ENCODE measurements at regions of chr10 and their contacts with region 1.

Region 1: DNA sequence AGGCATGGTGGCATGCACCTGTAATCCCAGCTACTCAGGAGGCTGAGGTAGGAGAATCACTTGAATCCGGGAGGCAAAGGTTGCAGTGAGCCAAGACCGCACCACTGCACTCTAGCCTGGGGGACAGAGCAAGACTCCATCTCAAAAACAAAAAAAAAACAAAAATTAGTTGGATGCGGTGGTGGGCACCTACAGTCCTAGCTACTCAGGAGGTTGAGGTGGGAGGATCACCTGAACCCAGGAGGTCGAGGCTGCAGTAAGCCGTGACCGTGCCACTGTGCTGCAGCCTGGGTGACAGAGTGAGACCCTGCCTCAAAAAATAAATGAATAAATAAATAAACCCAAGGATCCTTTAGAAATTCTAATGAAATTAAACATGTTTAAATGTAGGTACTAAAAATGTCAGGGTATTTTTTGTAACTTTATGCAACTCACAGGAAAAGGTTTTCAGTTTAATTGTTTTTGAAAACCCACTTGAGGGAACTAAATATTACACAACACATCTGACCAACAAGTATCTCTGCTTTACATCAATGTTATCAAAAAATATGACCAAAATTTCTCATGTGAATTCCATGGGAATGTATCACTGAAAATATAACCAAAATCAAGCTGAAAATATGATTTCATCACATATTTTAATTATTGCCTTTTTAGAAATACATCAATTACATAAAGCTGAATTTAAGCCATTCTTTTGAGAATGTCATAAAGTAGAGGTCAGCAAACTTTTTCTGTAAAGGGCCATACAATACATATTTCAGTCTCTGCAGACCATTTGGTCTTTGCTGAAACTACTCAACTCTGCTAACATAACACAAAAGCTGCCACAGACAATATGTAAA is 23.9 kb downstream of the UPF2 start:
- DNase-seq: no peak
- H3K4me3 ChIP-seq: no peak overlapping the region
- H3K27ac ChIP-seq: no peak overlapping the region
- H3K4me1 ChIP-seq: no peaks in the 10 kb centered on the region
- H3K27me3 ChIP-seq: no peaks in the 10 kb centered on the region
- CTCF ChIP-seq: no peak

Region 2: DNA sequence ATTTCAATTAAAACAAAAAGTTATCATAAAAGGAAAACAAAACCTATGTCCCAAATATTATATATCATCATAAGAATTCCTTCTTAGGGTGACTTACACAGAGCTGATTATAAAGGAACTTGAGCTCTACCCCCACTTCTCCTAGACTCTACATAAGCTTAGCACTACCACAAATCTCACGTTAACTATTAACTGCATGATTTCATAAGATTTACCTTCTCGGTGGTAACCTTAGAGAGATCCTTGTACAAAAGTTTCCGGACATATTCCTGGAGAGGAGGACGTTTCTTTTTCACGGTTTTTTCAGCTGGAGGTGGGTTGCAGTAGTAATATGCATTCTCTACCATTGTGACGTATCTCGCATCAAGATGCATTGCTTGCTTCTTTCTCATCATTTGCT is 59.7 kb before region 1 on chr10:
- CTCF ChIA-PET with region 1: no interaction called
- POLR2A ChIA-PET with region 1: no interaction called
- intact Hi-C with region 1: no loop called
- DNase-seq: no peak
- H3K4me3 ChIP-seq: no peak overlapping the region
- H3K27ac ChIP-seq: no peak overlapping the region
- H3K4me1 ChIP-seq: no peaks in the 10 kb centered on the region
- H3K27me3 ChIP-seq: no peaks in the 10 kb centered on the region
- CTCF ChIP-seq: no peak

Region 3: GRCh38 chr10:12061124-12061523 is 42.5 kb after region 1 on chr10:
- CTCF ChIA-PET with region 1: no interaction called
- POLR2A ChIA-PET with region 1: interaction called, 14 read pairs
- intact Hi-C with region 1: no loop called
- DNase-seq: no peak
- H3K4me3 ChIP-seq: no peak overlapping the region
- H3K27ac ChIP-seq: no peak overlapping the region
- H3K4me1 ChIP-seq: no peaks in the 10 kb centered on the region
- H3K27me3 ChIP-seq: no peaks in the 10 kb centered on the region
- CTCF ChIP-seq: no peak

Measured in PC-9 (cell line).